Caco-2 (cell line): ENCODE measurements at regions of chr9 and their contacts with region 1.

Region 1: DNA sequence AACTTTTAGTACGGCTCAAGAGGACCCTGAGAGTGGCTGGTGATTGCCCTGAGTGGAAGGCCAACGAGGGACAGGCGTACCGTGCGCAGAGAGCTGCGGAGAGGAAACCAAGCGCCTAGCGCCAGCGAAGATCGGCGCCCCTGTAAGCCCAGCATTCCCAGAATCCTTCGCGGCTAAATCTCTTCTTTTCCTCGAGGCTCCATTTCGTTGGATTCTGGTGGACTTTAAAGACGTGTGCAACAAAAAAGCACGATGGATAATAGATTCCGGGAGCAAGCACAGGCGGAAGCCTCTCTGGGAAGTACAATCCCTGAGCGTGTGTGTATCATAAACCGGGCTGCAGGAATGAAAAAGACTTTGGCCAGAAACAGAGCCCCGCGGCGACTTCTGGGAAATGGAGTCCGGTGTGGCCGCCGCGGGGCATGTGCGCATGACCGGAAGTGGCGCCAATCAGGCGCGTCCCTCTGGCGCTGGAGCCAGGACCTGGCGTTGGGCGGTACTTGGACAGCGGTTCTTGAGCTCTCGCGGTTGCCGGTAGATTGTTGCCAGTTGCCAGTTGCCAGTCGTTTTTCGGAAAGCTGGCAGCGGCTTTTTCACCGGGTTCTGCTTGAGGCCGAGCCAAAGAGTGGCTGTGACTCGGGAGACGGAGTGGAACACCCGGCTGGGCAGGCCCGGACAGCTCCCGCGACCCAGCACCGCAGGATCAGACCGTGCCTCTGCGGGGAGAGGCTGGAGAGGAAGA is at the start of gene ZNF79:
- DNase-seq: peak; percentile 93 to 94
- H3K4me3 ChIP-seq: peak within 1 kb of the TSS; percentile 67
- H3K4me3 Mint-ChIP-seq: peak within 1 kb of the TSS; percentile 100
- H3K27ac Mint-ChIP-seq: peak within 1 kb of the TSS; percentile 99
- H3K4me1 ChIP-seq: peaks cover 15% of the 10 kb centered on the region
- H3K4me1 Mint-ChIP-seq: peaks cover 17% of the 10 kb centered on the region
- H3K27me3 ChIP-seq: no peaks in the 10 kb centered on the region
- H3K27me3 Mint-ChIP-seq: no peaks in the 10 kb centered on the region
- CTCF ChIP-seq: no peak
- total RNA-seq, gene ZNF79: 9.2 and 9.3 TPM in 2 replicates

Region 2: DNA sequence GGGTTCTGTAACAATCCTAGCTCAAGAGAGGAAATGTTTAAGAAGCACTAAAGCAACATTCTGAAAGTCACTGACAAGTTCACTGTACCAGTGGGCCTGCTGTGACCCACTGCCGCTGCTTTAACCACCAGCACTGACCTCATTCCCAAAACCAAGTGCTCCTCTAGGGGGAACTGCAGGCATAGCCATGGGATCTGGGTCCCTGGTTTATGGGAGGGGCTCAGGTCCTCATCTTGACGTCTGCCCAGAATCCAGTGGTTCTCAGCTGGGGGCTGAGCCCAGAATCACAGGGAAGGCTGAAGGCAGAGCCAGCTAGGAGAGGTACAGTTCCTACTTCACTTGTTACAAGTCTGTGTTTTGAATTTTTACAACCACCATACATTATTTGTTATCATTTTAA is 63.3 kb before region 1 on chr9:
- CTCF ChIA-PET with region 1: no interaction called
- POLR2A ChIA-PET with region 1: interaction called, 3 read pairs
- intact Hi-C with region 1: loop called (anchors 2 kb)
- DNase-seq: peak; percentile 79 to 81
- H3K4me3 ChIP-seq: no peak overlapping the region
- H3K4me3 Mint-ChIP-seq: no peak overlapping the region
- H3K27ac Mint-ChIP-seq: peak overlapping the region; percentile 70
- H3K4me1 ChIP-seq: peaks cover 12% of the 10 kb centered on the region
- H3K4me1 Mint-ChIP-seq: peaks cover 18% of the 10 kb centered on the region
- H3K27me3 ChIP-seq: no peaks in the 10 kb centered on the region
- H3K27me3 Mint-ChIP-seq: no peaks in the 10 kb centered on the region
- CTCF ChIP-seq: peak; percentile 66 to 75

Region 3: DNA sequence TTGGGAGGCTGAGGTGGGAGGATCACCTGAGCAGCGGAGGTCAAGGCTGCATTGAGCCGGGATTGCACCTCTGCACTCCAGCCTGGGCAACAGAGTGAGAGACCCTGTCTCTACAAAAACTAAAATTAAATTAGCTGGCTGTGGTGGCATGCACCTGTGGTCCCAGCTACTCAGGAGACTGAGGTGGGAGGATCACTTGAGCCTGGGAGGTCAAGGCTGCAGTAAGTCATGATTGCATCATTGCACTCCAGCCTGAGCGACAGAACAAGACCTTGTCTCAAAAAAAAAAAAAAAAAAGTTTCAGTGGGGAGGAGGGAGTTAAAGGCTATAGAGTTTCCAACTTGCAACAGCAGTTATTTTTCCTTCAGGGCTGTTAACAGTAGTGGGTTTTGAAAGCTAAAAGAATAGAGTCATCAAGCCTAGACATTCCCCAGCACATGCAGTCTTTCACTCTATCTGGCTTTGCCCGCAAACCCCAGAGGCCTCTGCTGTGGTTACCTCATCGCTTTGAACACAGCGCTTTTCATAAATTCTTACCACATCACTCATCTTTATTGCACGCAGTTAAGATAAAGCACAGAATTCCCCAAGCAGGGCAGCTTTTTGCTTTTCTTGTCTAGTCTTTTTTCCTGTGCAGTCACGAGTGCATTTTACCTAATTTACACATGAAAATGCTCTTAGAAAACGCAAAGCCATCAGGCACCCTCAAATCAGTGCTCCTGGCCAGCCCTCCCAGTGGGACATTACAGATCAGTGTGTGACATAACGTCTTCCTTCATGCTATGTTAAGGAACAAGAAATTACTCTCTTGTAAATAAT is 35.9 kb before region 1 on chr9:
- CTCF ChIA-PET with region 1: interaction called, 8 read pairs
- POLR2A ChIA-PET with region 1: interaction called, 3 read pairs
- intact Hi-C with region 1: loop called (anchors 2 kb)
- DNase-seq: peak; percentile 91 to 95
- H3K4me3 ChIP-seq: no peak overlapping the region
- H3K4me3 Mint-ChIP-seq: peak overlapping the region; percentile 61
- H3K27ac Mint-ChIP-seq: peak overlapping the region; percentile 97
- H3K4me1 ChIP-seq: peaks cover 67% of the 10 kb centered on the region
- H3K4me1 Mint-ChIP-seq: peaks cover 73% of the 10 kb centered on the region
- H3K27me3 ChIP-seq: no peaks in the 10 kb centered on the region
- H3K27me3 Mint-ChIP-seq: no peaks in the 10 kb centered on the region
- CTCF ChIP-seq: no peak

Region 4: DNA sequence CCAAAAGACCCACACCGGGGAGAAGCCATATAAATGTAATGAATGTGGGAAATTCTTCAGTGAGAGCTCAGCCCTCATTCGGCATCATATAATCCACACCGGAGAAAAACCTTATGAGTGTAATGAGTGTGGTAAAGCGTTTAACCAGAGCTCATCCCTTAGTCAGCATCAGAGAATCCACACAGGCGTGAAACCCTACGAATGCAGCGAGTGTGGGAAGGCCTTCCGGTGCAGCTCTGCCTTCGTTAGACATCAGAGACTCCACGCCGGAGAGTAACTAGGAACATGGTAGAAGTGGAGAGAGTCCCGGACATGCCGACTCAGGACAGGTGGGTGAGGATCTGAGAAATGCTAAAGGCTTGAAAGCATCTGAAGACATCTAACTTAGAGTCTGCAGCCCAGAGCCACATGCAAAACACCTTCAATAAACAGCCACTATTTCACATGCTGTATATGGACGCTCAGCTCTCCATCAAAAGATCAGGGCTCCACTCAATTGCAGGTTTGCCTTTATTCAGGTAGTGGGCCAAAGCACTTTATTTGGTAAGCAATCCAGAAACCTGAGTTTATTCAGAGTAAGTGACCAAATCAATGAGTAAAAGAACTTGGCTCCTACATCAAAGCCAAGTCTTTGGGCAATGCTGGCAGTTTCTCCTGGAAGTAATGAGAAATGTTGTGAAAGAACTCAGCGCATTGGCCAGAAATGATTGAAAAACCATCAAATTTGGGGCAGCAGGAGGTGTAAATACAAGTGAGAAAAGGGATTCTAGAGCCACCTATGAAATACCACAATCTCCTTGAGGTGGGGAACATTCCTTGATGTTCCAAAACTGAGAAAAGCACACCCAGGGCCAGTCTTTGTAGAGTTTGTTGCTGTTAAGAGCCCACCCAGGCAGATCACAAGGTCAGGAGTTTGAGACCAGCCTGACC is 21.1 kb after region 1 on chr9:
- CTCF ChIA-PET with region 1: interaction called, 3 read pairs
- POLR2A ChIA-PET with region 1: interaction called, 18 read pairs
- intact Hi-C with region 1: no loop called
- DNase-seq: no peak
- H3K4me3 ChIP-seq: no peak overlapping the region
- H3K4me3 Mint-ChIP-seq: no peak overlapping the region
- H3K27ac Mint-ChIP-seq: peak overlapping the region; percentile 98
- H3K4me1 ChIP-seq: peaks cover 9% of the 10 kb centered on the region; the same call in 1 of the 2 replicates
- H3K4me1 Mint-ChIP-seq: peaks cover 10% of the 10 kb centered on the region
- H3K27me3 ChIP-seq: no peaks in the 10 kb centered on the region
- H3K27me3 Mint-ChIP-seq: peaks cover 3% of the 10 kb centered on the region
- CTCF ChIP-seq: no peak

Region 5: DNA sequence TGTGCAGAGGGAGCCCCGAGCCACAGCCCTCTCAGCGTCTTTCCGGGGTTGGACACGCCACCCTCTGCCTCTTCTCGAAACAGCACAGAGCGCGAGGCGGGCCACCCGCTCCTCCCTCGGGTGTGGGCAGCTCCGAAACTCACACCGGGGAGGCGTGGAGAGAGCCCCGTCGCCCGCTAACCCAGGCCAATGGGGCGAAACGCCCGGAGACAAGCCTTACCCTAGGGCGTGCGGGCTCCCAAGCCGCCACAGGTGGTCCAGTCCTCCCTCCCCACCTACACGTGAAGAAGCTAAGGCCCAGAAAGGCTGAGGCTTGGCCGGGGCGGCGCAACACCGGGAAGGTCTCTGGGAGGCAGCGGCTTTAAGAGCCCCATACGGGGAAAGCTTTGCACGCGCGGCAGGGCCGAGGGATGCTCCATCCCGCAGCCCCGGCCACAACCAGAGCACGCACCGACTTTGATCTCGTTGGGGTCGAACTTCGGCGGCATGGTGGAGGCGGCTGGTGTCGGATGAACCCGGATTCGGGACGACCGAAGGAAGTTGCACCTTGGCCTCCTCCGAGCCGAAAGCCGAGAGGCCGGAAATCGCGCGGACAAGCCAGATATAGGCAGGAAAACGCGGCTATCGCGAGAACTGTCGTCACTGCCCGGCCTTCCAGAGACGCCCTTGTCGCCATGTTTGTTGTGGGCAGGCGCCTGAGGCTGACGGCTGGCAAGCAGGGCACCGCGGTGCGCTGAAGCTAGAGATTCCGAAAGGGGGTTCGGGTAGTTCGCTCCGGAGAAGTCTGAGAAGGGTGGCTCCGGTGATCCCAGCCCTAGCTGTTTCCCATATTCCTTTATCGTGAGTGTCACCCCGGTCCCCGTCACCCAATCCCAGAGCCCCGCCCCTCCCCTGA is 27.0 kb after region 1 on chr9 and contains the starts of genes LRSAM1 and RPL12:
- CTCF ChIA-PET with region 1: interaction called, 3 read pairs
- POLR2A ChIA-PET with region 1: interaction called, 4 read pairs
- intact Hi-C with region 1: loop called (anchors 1 kb)
- DNase-seq: peak; percentile 96 to 98
- H3K4me3 ChIP-seq: peak within 1 kb of the TSS; percentile 98
- H3K4me3 Mint-ChIP-seq: peak within 1 kb of the TSS; percentile 95
- H3K27ac Mint-ChIP-seq: peak within 1 kb of the TSS; percentile 98
- H3K4me1 ChIP-seq: peaks cover 9% of the 10 kb centered on the region; the same call in 1 of the 2 replicates
- H3K4me1 Mint-ChIP-seq: peaks cover 18% of the 10 kb centered on the region
- H3K27me3 ChIP-seq: no peaks in the 10 kb centered on the region
- H3K27me3 Mint-ChIP-seq: peaks cover 3% of the 10 kb centered on the region
- CTCF ChIP-seq: no peak
- total RNA-seq, gene LRSAM1: 25.8 and 26.2 TPM in 2 replicates
- total RNA-seq, gene RPL12: 1,592 and 1,641 TPM in 2 replicates